RWPE1 (cell line): ENCODE measurements at regions of chr14 and their contacts with region 1.

Region 1: DNA sequence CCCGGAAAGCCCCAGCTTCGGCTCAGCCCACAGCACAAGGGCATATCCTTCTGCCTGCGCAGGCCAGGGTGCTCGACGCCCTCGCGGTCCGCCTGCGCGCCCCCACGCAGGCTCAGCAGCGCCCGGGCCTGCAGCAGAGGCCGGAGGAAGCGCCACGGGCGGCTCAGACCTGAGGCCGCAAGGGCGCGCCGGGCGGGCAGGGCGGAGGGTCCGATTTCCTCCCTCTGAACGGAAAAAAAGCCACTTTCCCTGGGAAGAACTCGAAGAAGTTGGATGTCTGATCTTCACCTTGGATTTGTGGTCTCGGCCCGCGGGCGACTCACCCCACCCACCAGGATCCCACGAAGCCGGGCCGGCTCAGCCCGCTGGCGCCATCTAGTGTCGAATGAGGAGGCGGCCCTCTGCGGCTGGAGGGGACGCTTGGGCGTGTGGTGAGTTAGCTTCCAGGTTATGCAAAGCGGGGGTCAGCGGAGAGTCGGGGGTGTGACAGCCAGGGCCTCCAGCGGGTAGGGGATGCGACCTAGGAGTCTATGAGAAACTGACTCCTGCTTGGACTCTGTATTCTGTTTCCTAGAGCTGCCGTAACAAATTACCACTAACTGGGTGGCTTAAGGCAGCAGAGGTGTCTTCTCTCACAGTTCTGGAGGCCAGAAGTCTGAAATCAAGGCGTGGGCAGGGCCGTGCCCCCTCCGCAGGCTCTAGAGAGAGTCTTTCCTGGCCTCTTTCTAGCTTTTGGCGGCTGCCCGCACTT is 40.0 kb upstream of the SRSF5 start:
- DNase-seq: peak; percentile 80
- H3K27ac ChIP-seq: peak overlapping the region; percentile 50
- CTCF ChIP-seq: peak; percentile 96

Region 2: DNA sequence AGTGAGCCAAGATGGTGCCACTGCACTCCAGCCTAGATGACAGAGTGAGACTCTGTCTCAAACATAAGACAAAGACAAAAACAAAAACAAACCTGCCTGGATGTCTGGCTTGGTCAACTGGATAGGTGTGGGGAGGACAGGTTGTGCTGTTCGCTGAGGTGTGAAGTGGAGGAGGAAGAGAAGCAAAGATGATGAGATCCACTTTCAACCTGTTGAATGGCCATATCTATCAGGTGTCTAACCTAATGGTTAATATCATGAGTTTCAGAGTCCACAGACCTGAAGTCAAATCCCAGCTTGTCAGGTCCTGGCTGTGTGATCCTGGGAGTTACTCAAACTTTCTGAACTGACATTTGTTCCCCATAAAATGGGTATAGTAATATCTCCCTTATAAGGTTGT is 142.5 kb before region 1 on chr14:
- CTCF ChIA-PET with region 1: interaction called, 22 read pairs
- POLR2A ChIA-PET with region 1: no interaction called
- DNase-seq: no peak
- H3K27ac ChIP-seq: no peak overlapping the region
- CTCF ChIP-seq: no peak

Region 3: DNA sequence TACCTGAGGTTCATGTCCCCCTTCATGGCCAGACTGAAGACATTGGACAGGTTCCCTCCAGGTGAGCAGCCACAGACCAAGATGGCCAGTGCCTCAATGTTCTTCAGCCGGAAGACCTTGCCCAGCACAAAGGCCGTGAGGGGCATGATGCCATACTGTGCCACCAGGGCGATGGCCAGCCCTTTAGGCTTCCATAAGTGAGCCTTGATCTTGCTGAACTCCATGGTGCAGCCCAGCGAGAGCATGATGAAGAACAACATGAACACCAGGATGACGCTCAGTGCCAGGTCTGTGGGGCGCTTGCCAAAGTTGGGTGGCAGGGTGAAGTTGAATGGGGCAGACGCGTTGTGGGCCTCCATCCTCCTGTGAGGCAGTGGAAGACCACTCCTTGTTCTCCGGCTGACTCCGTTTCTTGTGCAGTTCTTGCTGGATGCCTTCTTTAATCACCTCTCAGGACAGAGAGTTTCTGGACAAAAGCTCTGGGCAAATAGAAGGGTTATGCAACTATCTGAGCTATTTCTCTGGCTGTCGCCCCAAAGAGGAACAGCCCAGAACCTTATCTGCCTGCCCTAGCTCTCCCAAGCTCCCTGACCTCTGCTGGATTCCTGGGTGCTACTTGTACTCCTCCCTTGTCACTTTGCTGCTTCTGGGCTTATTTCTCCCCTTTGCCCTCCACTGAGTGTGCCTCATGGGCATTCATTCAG is 70.0 kb after region 1 on chr14 and contains the start of gene SLC10A1:
- CTCF ChIA-PET with region 1: no interaction called
- POLR2A ChIA-PET with region 1: no interaction called
- DNase-seq: no peak
- H3K27ac ChIP-seq: no peak within 1 kb of the TSS
- CTCF ChIP-seq: no peak